ENCODE measurements at regions of chr11 and their contacts with region 1.

Region 1: GRCh38 chr11:112961146-112961668 is at the start of gene NCAM1:
- DNase-seq: peak; percentile 88
- ATAC-seq: peak; percentile 76
- total RNA-seq, gene NCAM1: 250 TPM

Region 2: DNA sequence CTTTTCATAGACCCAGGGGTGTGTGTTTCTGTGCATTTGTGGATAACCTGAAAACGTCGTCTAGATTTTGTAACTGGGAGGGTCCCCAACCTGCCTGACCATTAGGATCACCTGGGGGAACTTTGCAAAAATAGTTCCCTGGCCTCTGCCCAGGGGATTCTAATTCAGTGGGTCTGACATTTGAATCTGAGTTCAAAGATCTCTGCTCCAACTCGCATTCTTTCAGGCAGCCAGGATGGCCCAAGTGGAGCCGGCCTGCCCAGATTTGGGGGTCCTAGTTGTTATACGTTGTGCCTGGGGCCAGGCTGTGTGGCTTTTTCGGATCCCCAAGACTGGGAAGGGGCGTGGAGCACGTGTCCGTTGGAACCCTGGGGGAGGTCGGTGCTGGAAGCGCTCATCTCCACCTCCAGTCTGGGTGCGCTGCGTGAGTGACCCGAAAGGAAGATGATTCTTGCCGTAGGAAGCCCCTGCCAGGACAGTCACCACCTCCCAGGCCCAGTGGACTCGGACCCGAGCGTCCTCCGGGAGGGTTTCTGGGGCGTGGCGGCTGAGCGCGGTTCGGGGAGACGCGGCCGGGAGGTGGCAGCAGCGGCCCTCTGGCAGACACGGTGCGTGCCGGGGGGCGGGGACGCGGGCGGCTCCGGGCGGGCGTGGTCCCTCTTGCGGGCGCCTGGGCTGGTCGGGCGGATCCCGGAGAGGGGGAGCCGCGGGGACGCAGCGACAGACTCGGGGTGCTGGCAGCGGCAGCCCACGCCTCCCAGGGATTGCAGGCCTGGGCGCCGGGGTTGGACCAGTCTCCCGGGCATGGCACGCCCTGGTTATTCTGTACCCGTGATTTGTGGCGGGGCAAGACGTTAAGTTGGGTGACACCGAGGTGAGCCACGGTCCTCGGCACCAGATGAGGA is 671.4 kb before region 1 on chr11:
- intact Hi-C with region 1: loop called (anchors 10 kb)
- DNase-seq: peak; percentile 94
- ATAC-seq: peak; percentile 93

Region 3: GRCh38 chr11:112655371-112655770 is 305.8 kb before region 1 on chr11:
- intact Hi-C with region 1: loop called (anchors 10 kb)
- DNase-seq: peak; percentile 91
- ATAC-seq: peak; percentile 78

Region 4: GRCh38 chr11:112837162-112837826 is 123.9 kb before region 1 on chr11:
- intact Hi-C with region 1: loop called (anchors 5 kb)
- DNase-seq: no peak
- ATAC-seq: peak; percentile 56

Region 5: DNA sequence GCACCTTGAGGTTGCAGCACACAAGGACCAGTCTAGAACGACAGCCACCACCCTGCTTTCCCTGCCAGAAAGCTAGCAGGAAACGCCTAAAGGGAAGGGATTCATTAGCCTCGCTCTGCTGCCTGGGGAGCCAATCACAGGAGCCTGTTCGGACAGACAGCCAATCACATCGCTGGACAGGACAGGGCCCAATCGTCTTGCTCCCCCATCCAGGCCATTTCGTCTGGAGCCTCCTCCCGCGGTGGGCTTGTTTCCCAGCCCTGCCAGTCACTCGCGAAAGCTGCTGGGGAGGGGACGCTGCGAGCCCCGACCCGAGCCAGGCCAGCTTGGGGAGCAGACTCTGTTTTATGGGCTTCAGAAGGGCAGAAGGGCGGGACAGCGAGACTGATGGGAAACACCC is 79.7 kb before region 1 on chr11:
- intact Hi-C with region 1: loop called (anchors 5 kb)
- DNase-seq: peak; percentile 83
- ATAC-seq: peak; percentile 94

Region 6: DNA sequence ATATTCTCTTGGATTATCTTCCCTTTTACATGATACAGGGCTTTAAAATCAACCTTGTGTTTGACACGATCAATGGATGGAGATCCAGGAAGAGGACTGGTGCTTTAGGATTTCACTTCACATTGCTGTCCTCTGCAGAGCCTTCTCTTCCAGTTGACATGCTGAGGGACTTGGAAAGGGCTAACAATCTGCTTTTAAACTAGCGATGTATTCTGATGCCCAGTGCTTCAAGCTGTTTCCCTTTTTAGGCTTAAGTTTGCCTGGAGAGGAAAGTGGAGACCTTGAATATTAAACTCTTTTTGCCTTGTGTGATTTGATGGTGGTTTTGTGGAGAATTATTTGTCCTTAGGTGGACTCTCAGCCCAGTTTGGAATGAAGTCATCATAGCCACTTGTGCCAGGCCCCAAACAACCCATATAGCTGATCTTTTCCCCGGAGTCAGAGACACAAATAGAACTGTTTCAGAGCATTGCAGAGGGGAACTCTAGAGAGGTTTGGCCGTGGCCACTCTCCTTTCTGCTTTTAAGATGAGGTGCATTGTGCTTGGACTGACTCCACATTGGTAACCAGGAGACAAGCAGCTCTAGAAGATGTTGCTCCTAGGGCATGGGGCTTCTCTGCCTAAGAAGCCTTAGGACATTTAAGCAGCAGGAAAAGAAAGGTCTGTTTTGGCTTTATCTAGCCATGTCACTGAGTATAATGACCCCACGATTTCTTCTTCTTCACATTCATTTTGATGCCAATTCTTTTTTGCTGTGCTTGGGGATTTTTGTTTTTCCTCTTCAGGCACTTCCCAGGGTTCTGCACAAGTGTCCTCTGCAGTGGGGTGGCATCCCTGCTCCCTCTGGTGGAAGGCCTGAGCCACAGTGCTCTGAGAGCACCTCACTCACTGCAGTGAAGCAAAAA is 152.8 kb after region 1 on chr11:
- intact Hi-C with region 1: loop called (anchors 2 kb)
- DNase-seq: no peak
- ATAC-seq: peak; percentile 85